OCI-LY7 (cell line): ENCODE measurements at regions of chr3 and their contacts with region 1.

Region 1: GRCh38 chr3:181709537-181710279 is 2.0 kb upstream of the SOX2 start:
- DNase-seq: peak; percentile 84
- H3K4me3 ChIP-seq: peak overlapping the region; percentile 46
- H3K27ac ChIP-seq: peak overlapping the region; percentile 18
- H3K4me1 ChIP-seq: peaks cover 45% of the 10 kb centered on the region
- CTCF ChIP-seq: peak; percentile 98

Region 2: DNA sequence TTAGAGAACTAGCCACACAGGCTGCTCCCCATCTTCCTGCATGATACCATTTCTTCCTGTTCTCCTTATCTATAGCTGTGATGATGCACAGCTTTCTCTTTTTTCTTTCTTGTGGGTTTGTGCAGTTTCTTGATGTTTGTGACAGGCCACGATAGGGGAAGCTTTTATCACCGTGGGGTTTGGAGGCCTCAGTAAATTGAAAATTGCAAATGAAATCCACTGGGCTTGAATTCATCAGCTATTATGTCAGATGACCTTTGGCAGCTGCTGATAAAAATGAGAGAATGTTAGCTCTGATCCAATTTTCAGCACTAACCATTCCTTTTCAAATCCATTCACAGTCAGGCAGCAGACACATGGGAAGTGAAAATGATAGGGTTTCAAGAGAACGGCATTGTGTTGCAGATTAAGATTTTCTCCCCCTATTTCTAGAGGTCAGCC is 174.9 kb before region 1 on chr3:
- CTCF ChIA-PET with region 1: no interaction called
- POLR2A ChIA-PET with region 1: no interaction called
- intact Hi-C with region 1: no loop called
- DNase-seq: no peak
- H3K4me3 ChIP-seq: no peak overlapping the region
- H3K27ac ChIP-seq: no peak overlapping the region
- H3K4me1 ChIP-seq: no peaks in the 10 kb centered on the region
- CTCF ChIP-seq: no peak

Region 3: GRCh38 chr3:181899702-181900101 is 190.0 kb after region 1 on chr3:
- CTCF ChIA-PET with region 1: no interaction called
- POLR2A ChIA-PET with region 1: no interaction called
- intact Hi-C with region 1: loop called (anchors 10 kb)
- DNase-seq: no peak
- H3K4me3 ChIP-seq: no peak overlapping the region
- H3K27ac ChIP-seq: no peak overlapping the region
- H3K4me1 ChIP-seq: peaks cover 9% of the 10 kb centered on the region
- CTCF ChIP-seq: no peak

Region 4: GRCh38 chr3:181932039-181932438 is 222.3 kb after region 1 on chr3:
- CTCF ChIA-PET with region 1: no interaction called
- POLR2A ChIA-PET with region 1: no interaction called
- intact Hi-C with region 1: loop called (anchors 5 kb)
- DNase-seq: peak; percentile 61
- H3K4me3 ChIP-seq: peak overlapping the region; percentile 33
- H3K27ac ChIP-seq: peak overlapping the region; percentile 77
- H3K4me1 ChIP-seq: peaks cover 53% of the 10 kb centered on the region
- CTCF ChIP-seq: no peak

Region 5: GRCh38 chr3:182412065-182412464 is 702.4 kb after region 1 on chr3:
- CTCF ChIA-PET with region 1: no interaction called
- POLR2A ChIA-PET with region 1: interaction called, 5 read pairs
- intact Hi-C with region 1: loop called (anchors 5 kb)
- DNase-seq: peak; percentile 55
- H3K4me3 ChIP-seq: peak overlapping the region; percentile 68
- H3K27ac ChIP-seq: peak overlapping the region; percentile 96
- H3K4me1 ChIP-seq: peaks cover 95% of the 10 kb centered on the region
- CTCF ChIP-seq: no peak

Region 6: GRCh38 chr3:182618085-182618732 is 908.5 kb after region 1 on chr3:
- CTCF ChIA-PET with region 1: no interaction called
- POLR2A ChIA-PET with region 1: no interaction called
- intact Hi-C with region 1: loop called (anchors 1 kb)
- DNase-seq: peak; percentile 77
- H3K4me3 ChIP-seq: no peak overlapping the region
- H3K27ac ChIP-seq: no peak overlapping the region
- H3K4me1 ChIP-seq: peaks cover 25% of the 10 kb centered on the region
- CTCF ChIP-seq: peak; percentile 96